PC-9 (cell line): ENCODE measurements at regions of chr2 and their contacts with region 1.

Region 1: GRCh38 chr2:60581433-60582282 is 28.2 kb upstream of the BCL11A start:
- DNase-seq: peak in 1 of 2 experiments; percentile 58
- H3K4me3 ChIP-seq: no peak overlapping the region
- H3K27ac ChIP-seq: no peak overlapping the region
- H3K4me1 ChIP-seq: no peaks in the 10 kb centered on the region
- H3K27me3 ChIP-seq: peaks cover 100% of the 10 kb centered on the region
- CTCF ChIP-seq: peak; percentile 79

Region 2: GRCh38 chr2:58762176-58762781 is 1819.4 kb before region 1 on chr2:
- CTCF ChIA-PET with region 1: interaction called, 3 read pairs
- POLR2A ChIA-PET with region 1: no interaction called
- intact Hi-C with region 1: loop called (anchors 1 kb)
- DNase-seq: peak; percentile 67 to 75
- H3K4me3 ChIP-seq: no peak overlapping the region
- H3K27ac ChIP-seq: no peak overlapping the region
- H3K4me1 ChIP-seq: no peaks in the 10 kb centered on the region
- H3K27me3 ChIP-seq: no peaks in the 10 kb centered on the region
- CTCF ChIP-seq: peak; percentile 72

Region 3: DNA sequence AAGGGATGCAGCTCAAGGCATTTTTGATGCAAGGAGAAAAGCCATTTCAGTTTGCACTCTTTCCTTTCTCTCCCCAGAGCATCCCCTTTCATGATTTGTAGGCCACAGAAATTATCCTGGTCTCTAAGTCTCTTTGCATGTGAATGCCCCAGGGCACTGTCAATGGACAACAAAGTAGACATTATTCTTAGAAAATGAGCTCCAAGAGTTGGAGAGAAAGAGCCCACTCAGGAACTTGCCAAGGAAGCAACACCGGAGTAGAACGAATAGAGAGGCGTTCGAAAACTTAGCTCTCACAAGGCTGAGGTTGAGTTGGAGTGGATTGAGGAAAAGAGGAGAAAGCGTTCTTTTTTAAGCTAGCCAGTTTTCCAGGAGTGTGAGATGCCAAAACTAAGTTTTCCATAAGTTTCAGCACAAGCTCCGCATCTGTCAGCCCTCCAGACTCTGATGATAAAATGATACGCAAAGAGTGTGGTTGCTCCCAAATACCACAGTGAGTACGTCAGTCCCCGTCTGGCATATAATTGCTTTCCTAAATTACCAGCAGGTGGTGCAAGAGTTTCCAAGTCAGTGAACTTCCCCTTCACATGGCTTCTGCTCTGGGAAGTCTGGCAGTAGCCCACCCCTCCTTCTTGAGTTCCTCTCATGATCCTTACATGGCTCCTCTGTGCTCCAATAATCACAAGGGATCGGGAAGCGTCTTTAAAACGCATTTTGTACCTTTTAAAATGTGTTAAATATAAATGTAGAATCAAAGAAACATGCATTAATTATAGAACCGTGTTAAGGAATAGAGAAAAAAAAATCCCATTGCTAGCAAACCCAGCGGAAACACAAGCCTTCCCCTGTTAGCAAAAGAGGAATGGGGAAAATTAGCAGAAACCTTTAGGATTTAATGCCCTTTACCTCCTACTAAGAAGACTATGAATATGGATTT is 1279.9 kb before region 1 on chr2:
- CTCF ChIA-PET with region 1: no interaction called
- POLR2A ChIA-PET with region 1: no interaction called
- intact Hi-C with region 1: loop called (anchors 10 kb)
- DNase-seq: peak; percentile 7 to 42
- H3K4me3 ChIP-seq: no peak overlapping the region
- H3K27ac ChIP-seq: no peak overlapping the region
- H3K4me1 ChIP-seq: no peaks in the 10 kb centered on the region
- H3K27me3 ChIP-seq: no peaks in the 10 kb centered on the region
- CTCF ChIP-seq: peak; percentile 54